ENCODE measurements at regions of chr13 and their contacts with region 1.

Region 1: GRCh38 chr13:76868371-76868770 is 17.8 kb downstream of the KCTD12 start:
- DNase-seq: no peak
- ATAC-seq: no peak
- H3K4me3 ChIP-seq: no peak overlapping the region
- H3K27ac ChIP-seq: no peak overlapping the region
- H3K4me1 ChIP-seq: peaks cover 0 to 8% (median 0%) of the 10 kb centered on the region in 12 donors
- H3K27me3 ChIP-seq: no peaks in the 10 kb centered on the region
- CTCF ChIP-seq: no peak
- POLR2A ChIP-seq: no peak

Region 2: GRCh38 chr13:76828316-76828741 is 40.0 kb before region 1 on chr13:
- intact Hi-C with region 1: loop called in 1 of 10 experiments (anchors 5 kb)
- DNase-seq: no peak
- ATAC-seq: no peak
- H3K4me3 ChIP-seq: no peak overlapping the region
- H3K27ac ChIP-seq: peak overlapping the region in 1 of 12 donors; percentile 72
- H3K4me1 ChIP-seq: peaks cover 0 to 30% (median 14%) of the 10 kb centered on the region in 12 donors
- H3K27me3 ChIP-seq: no peaks in the 10 kb centered on the region
- CTCF ChIP-seq: no peak
- POLR2A ChIP-seq: no peak